K562 (cell line): ENCODE measurements at regions of chr15 and their contacts with region 1.

Region 1: GRCh38 chr15:38642689-38643270 is 78.2 kb upstream of the RASGRP1 start:
- DNase-seq: no peak
- ATAC-seq: no peak
- H3K4me3 ChIP-seq: no peak overlapping the region
- H3K27ac ChIP-seq: no peak overlapping the region
- H3K4me1 ChIP-seq: no peaks in the 10 kb centered on the region
- H3K27me3 ChIP-seq: peaks cover 9 to 13% of the 10 kb centered on the region in 2 experiments; a peak in 3 of 5 replicates
- CTCF ChIP-seq: no peak
- EP300 ChIP-seq: no peak
- POLR2A ChIP-seq: no peak
- RAD21 ChIP-seq: no peak

Region 2: GRCh38 chr15:38683382-38684242 is 40.8 kb after region 1 on chr15:
- CTCF ChIA-PET with region 1: no interaction called
- POLR2A ChIA-PET with region 1: no interaction called
- in situ Hi-C with region 1: no loop called
- intact Hi-C with region 1: loop called (anchors 5 kb)
- DNase-seq: peak; percentile 28 to 62 (median 32)
- ATAC-seq: peak; percentile 88
- H3K4me3 ChIP-seq: no peak overlapping the region
- H3K27ac ChIP-seq: no peak overlapping the region
- H3K4me1 ChIP-seq: no peaks in the 10 kb centered on the region
- H3K27me3 ChIP-seq: peaks cover 0 to 2% of the 10 kb centered on the region in 2 experiments; a peak in 1 of 5 replicates
- CTCF ChIP-seq: peak; percentile 63 to 72 (median 65); a peak in 5 of 6 replicates
- EP300 ChIP-seq: no peak
- POLR2A ChIP-seq: no peak
- RAD21 ChIP-seq: peak; percentile 75 to 80

Region 3: GRCh38 chr15:38695249-38696108 is 52.7 kb after region 1 on chr15:
- CTCF ChIA-PET with region 1: no interaction called
- POLR2A ChIA-PET with region 1: no interaction called
- in situ Hi-C with region 1: no loop called
- intact Hi-C with region 1: no loop called
- DNase-seq: no peak
- ATAC-seq: no peak
- H3K4me3 ChIP-seq: no peak overlapping the region
- H3K27ac ChIP-seq: no peak overlapping the region
- H3K4me1 ChIP-seq: no peaks in the 10 kb centered on the region
- H3K27me3 ChIP-seq: no peaks in the 10 kb centered on the region; a peak in 2 of 5 replicates
- CTCF ChIP-seq: no peak
- EP300 ChIP-seq: no peak
- POLR2A ChIP-seq: no peak
- RAD21 ChIP-seq: no peak

Region 4: DNA sequence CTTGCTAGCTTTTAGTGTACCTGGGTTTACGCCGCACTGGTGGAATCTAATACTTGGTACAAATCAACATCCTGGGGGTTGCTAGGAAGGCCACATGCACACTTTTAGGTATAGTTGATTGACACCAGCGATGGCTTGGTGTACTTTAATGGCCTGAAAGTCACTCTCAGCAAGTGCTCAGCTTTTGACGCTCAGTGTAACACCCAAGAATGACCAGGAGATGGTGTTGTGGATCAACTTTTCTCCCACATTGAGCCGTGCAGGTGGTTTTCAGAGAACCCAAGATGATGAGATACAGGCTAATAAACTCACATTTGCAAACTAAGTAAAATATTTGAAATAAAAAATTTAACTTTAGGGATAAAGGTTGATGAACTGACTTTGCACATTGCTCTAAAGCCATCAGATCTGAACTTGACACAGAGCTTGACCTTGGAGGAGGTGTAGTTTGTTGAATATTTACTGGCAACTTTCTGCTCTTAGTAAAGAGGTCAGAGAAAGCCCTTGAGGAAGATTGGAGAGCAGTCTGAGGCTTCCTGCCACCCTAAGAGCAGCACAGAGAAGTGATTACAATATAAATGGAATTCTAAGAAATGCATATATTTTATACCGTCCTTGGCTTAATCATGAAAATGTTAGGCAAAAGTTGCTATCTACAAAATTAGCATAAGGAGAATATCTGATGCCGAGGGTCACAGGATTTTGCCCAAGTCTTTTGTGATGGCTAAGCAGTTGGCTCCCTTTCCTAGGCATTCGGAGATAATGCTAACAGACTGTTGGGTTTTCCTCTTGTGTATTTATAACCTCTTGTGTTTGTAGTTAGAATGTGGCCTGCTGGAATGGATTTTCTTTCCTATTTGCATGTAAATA is 65.3 kb after region 1 on chr15:
- CTCF ChIA-PET with region 1: no interaction called
- POLR2A ChIA-PET with region 1: no interaction called
- in situ Hi-C with region 1: no loop called
- intact Hi-C with region 1: no loop called
- DNase-seq: peak; percentile 51 to 68 (median 62)
- ATAC-seq: peak; percentile 95
- H3K4me3 ChIP-seq: no peak overlapping the region
- H3K27ac ChIP-seq: no peak overlapping the region
- H3K4me1 ChIP-seq: no peaks in the 10 kb centered on the region
- H3K27me3 ChIP-seq: peaks cover 9 to 12% of the 10 kb centered on the region in 2 experiments
- CTCF ChIP-seq: peak; percentile 58 to 78 (median 71)
- EP300 ChIP-seq: no peak
- POLR2A ChIP-seq: no peak
- RAD21 ChIP-seq: peak; percentile 72 to 80